Calu3 (cell line): ENCODE measurements at regions of chr11 and their contacts with region 1.

Region 1: GRCh38 chr11:118401151-118401878 is at the start of gene ATP5MG:
- DNase-seq: peak; percentile 77
- H3K4me3 Mint-ChIP-seq: peak within 1 kb of the TSS; percentile 79
- H3K27ac Mint-ChIP-seq: peak within 1 kb of the TSS; percentile 90
- H3K4me1 Mint-ChIP-seq: peaks cover 10% of the 10 kb centered on the region
- H3K27me3 Mint-ChIP-seq: no peaks in the 10 kb centered on the region
- CTCF ChIP-seq: no peak
- total RNA-seq, gene ATP5MG: 145 and 151 TPM in 2 replicates

Region 2: DNA sequence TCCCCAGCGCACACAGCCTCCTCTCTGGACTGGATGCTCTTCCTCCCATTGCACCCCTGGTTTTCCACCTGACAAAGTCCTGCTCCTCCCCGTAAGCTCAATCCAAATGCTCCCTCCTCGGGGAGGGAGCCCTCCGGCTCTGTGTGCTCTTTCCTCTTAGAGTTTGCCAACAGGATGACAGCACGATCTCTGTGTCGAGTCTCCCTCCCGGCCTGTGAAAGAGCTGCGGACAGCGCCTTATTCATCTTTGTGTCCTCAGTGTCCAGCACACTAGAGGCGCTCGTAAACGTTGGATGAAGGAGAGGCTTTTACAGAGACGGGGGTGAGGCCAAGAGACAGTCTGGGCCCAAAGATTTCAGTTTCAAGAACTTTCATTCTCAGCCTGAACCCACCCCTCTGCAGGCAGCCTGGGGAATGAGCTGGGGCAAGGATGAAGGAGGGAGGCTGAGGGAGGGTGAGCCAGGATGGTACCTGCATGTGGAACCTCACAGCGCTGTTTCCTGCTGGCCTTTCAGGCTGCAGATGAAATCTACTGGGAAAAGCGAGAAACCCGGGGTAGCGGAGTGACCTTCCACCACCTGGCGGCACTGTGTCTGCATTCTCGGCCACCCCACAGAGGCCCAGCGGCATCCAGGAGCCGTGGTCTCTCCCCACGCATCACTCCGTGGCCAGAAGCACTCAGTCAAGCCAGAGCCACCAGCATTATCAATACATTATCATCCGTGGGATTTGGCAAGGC is 332.9 kb before region 1 on chr11:
- CTCF ChIA-PET with region 1: no interaction called
- intact Hi-C with region 1: no loop called
- DNase-seq: no peak
- H3K4me3 Mint-ChIP-seq: no peak overlapping the region
- H3K27ac Mint-ChIP-seq: no peak overlapping the region
- H3K4me1 Mint-ChIP-seq: no peaks in the 10 kb centered on the region
- H3K27me3 Mint-ChIP-seq: no peaks in the 10 kb centered on the region
- CTCF ChIP-seq: no peak

Region 3: GRCh38 chr11:118435893-118436624 is 34.7 kb after region 1 on chr11 and contains the start of gene KMT2A:
- CTCF ChIA-PET with region 1: interaction called, 4 read pairs
- intact Hi-C with region 1: loop called (anchors 5 kb)
- DNase-seq: peak; percentile 98
- H3K4me3 Mint-ChIP-seq: peak within 1 kb of the TSS; percentile 88
- H3K27ac Mint-ChIP-seq: peak within 1 kb of the TSS; percentile 72
- H3K4me1 Mint-ChIP-seq: peaks cover 9% of the 10 kb centered on the region
- H3K27me3 Mint-ChIP-seq: no peaks in the 10 kb centered on the region
- CTCF ChIP-seq: no peak
- total RNA-seq, gene KMT2A: 58.1 and 61.8 TPM in 2 replicates

Region 4: DNA sequence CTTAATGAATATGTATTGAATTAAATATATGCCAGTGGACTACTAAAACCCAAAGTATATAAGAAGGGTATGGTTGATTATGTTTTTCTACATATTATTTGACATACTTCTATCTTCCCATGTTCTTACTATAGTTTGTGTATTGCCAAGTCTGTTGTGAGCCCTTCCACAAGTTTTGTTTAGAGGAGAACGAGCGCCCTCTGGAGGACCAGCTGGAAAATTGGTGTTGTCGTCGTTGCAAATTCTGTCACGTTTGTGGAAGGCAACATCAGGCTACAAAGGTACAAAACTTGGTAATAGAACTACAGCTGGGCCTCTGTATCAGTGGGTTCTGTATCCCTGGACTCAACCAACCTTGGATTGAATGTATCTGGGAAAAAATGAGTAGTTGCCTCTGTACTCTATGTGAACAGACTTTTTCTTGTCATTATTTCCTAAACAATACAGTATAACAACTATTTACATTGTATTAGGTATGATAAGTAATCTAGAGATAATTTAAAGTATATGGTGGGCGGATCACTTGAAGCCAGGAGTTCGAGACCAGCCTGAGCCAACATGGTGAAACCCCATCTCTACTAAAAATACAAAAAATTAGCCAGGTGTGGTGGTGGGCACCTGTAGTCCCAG is 87.3 kb after region 1 on chr11:
- CTCF ChIA-PET with region 1: no interaction called
- intact Hi-C with region 1: loop called (anchors 1 kb)
- DNase-seq: peak; percentile 64
- H3K4me3 Mint-ChIP-seq: no peak overlapping the region
- H3K27ac Mint-ChIP-seq: no peak overlapping the region
- H3K4me1 Mint-ChIP-seq: no peaks in the 10 kb centered on the region
- H3K27me3 Mint-ChIP-seq: no peaks in the 10 kb centered on the region
- CTCF ChIP-seq: peak; percentile 54